Activated B cell treated with CpG ODN at 0.5 μM for 24 hours (primary cell): ENCODE measurements at regions of chr19 and their contacts with region 1.

Region 1: DNA sequence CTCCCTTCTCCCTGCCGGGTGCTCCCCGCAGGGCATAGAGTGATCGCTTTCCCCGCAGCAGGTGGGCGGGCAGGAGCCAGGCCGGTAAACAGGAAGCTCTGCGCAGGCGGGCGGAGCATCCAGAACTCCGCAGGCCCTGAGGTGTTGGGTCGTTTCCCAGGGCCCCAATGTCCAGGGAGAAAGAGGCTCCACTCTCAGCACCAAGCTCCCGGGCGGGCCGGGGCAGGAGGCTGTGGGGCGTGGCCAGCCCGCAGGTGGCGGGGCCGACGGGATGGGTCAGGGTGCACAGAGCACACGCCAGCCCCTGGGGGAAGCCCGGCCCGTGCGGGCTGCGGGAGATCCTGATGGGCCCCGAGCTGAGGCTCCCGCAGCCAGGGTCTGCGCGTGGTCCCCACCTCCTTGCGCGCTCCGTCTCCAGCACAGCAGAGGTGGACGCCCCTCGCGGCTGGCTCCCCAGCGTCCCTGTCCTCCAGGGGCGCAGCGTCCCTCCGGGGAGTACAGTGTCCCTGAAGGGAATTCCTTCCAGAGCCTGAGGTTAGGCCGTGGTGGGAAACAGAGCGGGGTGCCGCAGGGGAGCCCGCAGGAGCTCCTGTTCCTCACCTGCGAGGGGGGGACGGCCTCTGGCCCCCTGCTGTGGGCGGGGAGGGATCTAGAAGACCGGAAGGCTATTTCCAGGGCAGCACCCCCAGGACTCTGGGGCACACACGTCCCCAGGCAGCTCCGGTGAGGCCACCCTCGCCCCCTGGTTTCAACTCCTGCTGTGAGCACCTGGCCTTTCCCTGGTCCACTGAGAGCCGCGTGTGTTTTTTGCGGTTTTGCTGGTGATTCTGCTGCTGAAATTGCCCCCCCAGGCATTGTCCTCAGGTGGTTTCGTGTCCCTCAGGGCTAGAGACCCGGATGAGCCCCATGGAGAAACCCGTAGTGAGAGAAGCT is 12.2 kb downstream of the PIP5K1C start:
- DNase-seq: peak; percentile 50
- ATAC-seq: peak; percentile 55
- H3K4me3 Mint-ChIP-seq: peak overlapping the region; percentile 83
- H3K27ac Mint-ChIP-seq: peak overlapping the region; percentile 92
- H3K4me1 Mint-ChIP-seq: peaks cover 57% of the 10 kb centered on the region
- H3K27me3 Mint-ChIP-seq: no peaks in the 10 kb centered on the region
- CTCF ChIP-seq: no peak

Region 2: GRCh38 chr19:3618144-3618810 is 69.8 kb before region 1 on chr19:
- CTCF ChIA-PET with region 1: no interaction called
- POLR2A ChIA-PET with region 1: interaction called, 10 read pairs
- intact Hi-C with region 1: no loop called
- DNase-seq: peak; percentile 65
- ATAC-seq: peak; percentile 81
- H3K4me3 Mint-ChIP-seq: no peak overlapping the region
- H3K27ac Mint-ChIP-seq: no peak overlapping the region
- H3K4me1 Mint-ChIP-seq: peaks cover 14% of the 10 kb centered on the region
- H3K27me3 Mint-ChIP-seq: no peaks in the 10 kb centered on the region
- CTCF ChIP-seq: peak; percentile 34

Region 3: GRCh38 chr19:3670796-3671679 is 17.0 kb before region 1 on chr19:
- CTCF ChIA-PET with region 1: interaction called, 4 read pairs
- POLR2A ChIA-PET with region 1: interaction called, 4 read pairs
- intact Hi-C with region 1: loop called (anchors 2 kb)
- DNase-seq: no peak
- ATAC-seq: peak; percentile 47
- H3K4me3 Mint-ChIP-seq: peak overlapping the region; percentile 67
- H3K27ac Mint-ChIP-seq: no peak overlapping the region
- H3K4me1 Mint-ChIP-seq: peaks cover 36% of the 10 kb centered on the region
- H3K27me3 Mint-ChIP-seq: no peaks in the 10 kb centered on the region
- CTCF ChIP-seq: no peak

Region 4: GRCh38 chr19:3700221-3701032 is 12.4 kb after region 1 on chr19 and contains the start of gene PIP5K1C:
- CTCF ChIA-PET with region 1: interaction called, 6 read pairs
- POLR2A ChIA-PET with region 1: interaction called, 13 read pairs
- intact Hi-C with region 1: loop called (anchors 1 kb)
- DNase-seq: peak; percentile 96
- ATAC-seq: peak; percentile 98
- H3K4me3 Mint-ChIP-seq: peak within 1 kb of the TSS; percentile 89
- H3K27ac Mint-ChIP-seq: peak within 1 kb of the TSS; percentile 65
- H3K4me1 Mint-ChIP-seq: peaks cover 37% of the 10 kb centered on the region
- H3K27me3 Mint-ChIP-seq: no peaks in the 10 kb centered on the region
- CTCF ChIP-seq: no peak
- total RNA-seq, gene PIP5K1C: 28.3 and 31.1 TPM in 2 replicates

Region 5: DNA sequence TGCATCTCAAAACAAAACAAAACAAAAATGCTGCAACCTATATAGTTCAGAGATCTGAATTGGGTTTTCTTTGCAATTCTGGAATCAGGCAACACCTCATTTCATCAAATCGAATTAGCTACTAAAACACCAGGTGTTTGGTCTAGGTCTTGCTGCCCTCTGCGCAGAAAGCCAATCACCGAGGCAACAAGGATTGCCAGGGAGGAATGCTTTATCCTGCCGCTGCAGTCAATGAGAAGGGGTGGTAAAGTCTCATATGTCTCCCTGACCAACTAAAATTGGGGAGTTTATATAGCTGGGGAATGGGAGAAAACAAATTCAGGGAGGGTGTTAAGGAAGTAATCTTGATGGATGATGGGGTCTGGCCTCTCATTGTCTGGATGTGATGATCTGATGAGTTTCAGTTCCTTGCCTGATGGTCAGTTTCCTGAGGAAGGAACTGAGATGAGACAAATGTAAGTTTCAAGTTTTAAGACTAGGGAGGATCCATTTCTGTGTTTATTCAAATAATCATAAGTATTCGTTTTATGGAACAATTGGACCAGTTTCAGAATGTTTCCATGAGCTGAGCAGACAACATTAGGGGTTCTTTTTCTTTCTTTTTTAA is 553.9 kb after region 1 on chr19:
- CTCF ChIA-PET with region 1: no interaction called
- POLR2A ChIA-PET with region 1: interaction called, 11 read pairs
- intact Hi-C with region 1: no loop called
- DNase-seq: no peak
- ATAC-seq: no peak
- H3K4me3 Mint-ChIP-seq: peak overlapping the region; percentile 2
- H3K27ac Mint-ChIP-seq: peak overlapping the region; percentile 56
- H3K4me1 Mint-ChIP-seq: peaks cover 24% of the 10 kb centered on the region
- H3K27me3 Mint-ChIP-seq: no peaks in the 10 kb centered on the region
- CTCF ChIP-seq: no peak